Activated B cell treated with CpG ODN at 0.5 μM for 24 hours (primary cell): ENCODE measurements at regions of chr13 and their contacts with region 1.

Region 1: GRCh38 chr13:46687810-46688209 is 109.2 kb downstream of the ESD start:
- DNase-seq: no peak
- ATAC-seq: peak; percentile 67
- H3K4me3 Mint-ChIP-seq: no peak overlapping the region
- H3K27ac Mint-ChIP-seq: no peak overlapping the region
- H3K4me1 Mint-ChIP-seq: peaks cover 24% of the 10 kb centered on the region
- H3K27me3 Mint-ChIP-seq: no peaks in the 10 kb centered on the region
- CTCF ChIP-seq: no peak

Region 2: DNA sequence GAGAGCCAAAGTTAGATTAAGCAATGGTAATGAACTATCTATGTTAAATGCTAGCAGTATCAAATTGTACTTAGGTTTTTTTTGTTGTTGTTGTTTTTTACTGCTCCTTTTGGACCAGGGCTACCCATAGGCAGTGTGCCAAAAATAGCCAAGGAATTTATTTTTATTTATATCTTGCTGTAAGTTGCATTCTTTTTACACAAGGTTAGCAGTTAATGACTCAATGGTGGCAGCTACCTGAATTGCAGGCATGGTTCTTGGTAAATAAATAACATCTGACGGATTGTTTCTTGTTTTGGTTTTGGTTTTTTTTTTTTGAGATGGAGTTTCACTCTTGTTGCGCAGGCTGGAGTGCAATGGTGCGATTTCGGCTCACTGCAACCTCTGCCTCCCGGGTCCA is 1916.9 kb before region 1 on chr13:
- CTCF ChIA-PET with region 1: no interaction called
- POLR2A ChIA-PET with region 1: no interaction called
- intact Hi-C with region 1: no loop called
- DNase-seq: no peak
- ATAC-seq: no peak
- H3K4me3 Mint-ChIP-seq: no peak overlapping the region
- H3K27ac Mint-ChIP-seq: no peak overlapping the region
- H3K4me1 Mint-ChIP-seq: peaks cover 5% of the 10 kb centered on the region
- H3K27me3 Mint-ChIP-seq: no peaks in the 10 kb centered on the region
- CTCF ChIP-seq: no peak

Region 3: GRCh38 chr13:45464687-45465453 is 1222.9 kb before region 1 on chr13 and contains the start of gene COG3:
- CTCF ChIA-PET with region 1: no interaction called
- POLR2A ChIA-PET with region 1: no interaction called
- intact Hi-C with region 1: no loop called
- DNase-seq: peak; percentile 90
- ATAC-seq: peak; percentile 97
- H3K4me3 Mint-ChIP-seq: peak within 1 kb of the TSS; percentile 95
- H3K27ac Mint-ChIP-seq: peak within 1 kb of the TSS; percentile 90
- H3K4me1 Mint-ChIP-seq: peaks cover 41% of the 10 kb centered on the region
- H3K27me3 Mint-ChIP-seq: peaks cover 1% of the 10 kb centered on the region
- CTCF ChIP-seq: no peak
- total RNA-seq, gene COG3: 26.0 and 31.6 TPM in 2 replicates

Region 4: DNA sequence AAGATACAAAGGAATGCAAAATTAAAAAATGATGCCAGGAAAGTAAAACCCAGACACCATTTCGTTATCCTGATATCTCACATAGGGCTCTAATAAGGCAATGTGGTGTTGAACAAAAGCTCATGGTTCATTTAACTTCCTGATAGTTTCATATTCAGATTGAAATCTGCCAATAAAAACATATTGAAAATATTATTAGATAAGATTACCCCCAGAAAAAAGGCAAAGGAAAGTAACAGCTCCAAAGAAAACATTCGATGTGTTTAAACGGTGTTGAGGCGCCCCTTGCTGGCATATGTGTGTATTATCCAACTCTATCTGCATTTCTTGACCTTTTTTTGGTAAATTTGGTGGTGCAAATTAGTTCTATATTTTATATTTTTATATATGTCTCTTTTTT is 33.2 kb after region 1 on chr13:
- CTCF ChIA-PET with region 1: no interaction called
- POLR2A ChIA-PET with region 1: no interaction called
- intact Hi-C with region 1: loop called (anchors 1 kb)
- DNase-seq: no peak
- ATAC-seq: peak; percentile 49
- H3K4me3 Mint-ChIP-seq: no peak overlapping the region
- H3K27ac Mint-ChIP-seq: no peak overlapping the region
- H3K4me1 Mint-ChIP-seq: peaks cover 8% of the 10 kb centered on the region
- H3K27me3 Mint-ChIP-seq: no peaks in the 10 kb centered on the region
- CTCF ChIP-seq: no peak